Colonic mucosa (tissue), 4 donors: ENCODE measurements at regions of chr15 and their contacts with region 1.

Region 1: GRCh38 chr15:39580117-39580484 is 778 bp upstream of the THBS1 start:
- DNase-seq: peak; percentile 98
- H3K4me3 ChIP-seq: peak overlapping the region; percentile 62
- H3K27ac ChIP-seq: peak overlapping the region; percentile 88
- H3K4me1 ChIP-seq: no peaks in the 10 kb centered on the region
- H3K27me3 ChIP-seq: no peaks in the 10 kb centered on the region
- CTCF ChIP-seq: peak; percentile 99

Region 2: DNA sequence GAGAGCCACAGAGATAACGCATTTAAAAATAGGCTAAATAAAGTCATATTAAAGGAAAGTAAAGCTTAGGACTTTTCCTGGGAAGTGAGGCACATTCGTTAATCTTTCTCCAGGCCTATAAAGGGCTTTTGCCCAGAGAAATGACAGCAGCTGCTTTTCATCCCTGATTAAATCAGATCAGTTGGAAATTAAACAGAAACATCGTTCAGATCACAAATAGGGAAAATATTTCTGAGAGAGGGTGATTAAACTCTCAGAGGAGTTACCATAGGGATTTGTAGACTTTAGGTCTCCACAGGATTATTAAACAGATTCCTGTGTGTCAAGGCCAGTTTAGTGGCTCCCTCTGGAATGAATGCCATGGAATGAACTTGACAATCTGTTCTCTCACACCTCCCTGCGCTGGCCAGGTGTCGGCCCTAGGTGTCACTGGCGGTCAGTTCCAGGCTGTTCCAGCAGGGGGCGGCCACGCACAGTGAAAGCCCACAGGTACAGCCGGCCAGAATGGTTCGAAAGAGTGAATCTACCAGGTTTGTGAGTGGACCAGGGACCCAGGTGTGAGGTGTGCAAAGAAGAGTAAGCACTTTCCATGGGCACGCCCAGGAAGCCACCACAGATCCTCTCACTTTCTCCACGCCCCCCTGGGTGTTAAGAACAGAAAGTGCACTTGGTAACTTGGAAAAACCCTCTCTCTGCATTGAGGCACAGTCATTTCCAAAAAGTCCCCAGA is 762.5 kb before region 1 on chr15:
- intact Hi-C with region 1: loop called (anchors 5 kb)
- DNase-seq: peak; percentile 93
- H3K4me3 ChIP-seq: no peak overlapping the region
- H3K27ac ChIP-seq: no peak overlapping the region
- H3K4me1 ChIP-seq: no peaks in the 10 kb centered on the region
- H3K27me3 ChIP-seq: no peaks in the 10 kb centered on the region
- CTCF ChIP-seq: peak; percentile 98

Region 3: GRCh38 chr15:39125904-39126303 is 454.2 kb before region 1 on chr15:
- intact Hi-C with region 1: loop called (anchors 5 kb)
- DNase-seq: peak; percentile 42
- H3K4me3 ChIP-seq: no peak overlapping the region
- H3K27ac ChIP-seq: no peak overlapping the region
- H3K4me1 ChIP-seq: no peaks in the 10 kb centered on the region
- H3K27me3 ChIP-seq: no peaks in the 10 kb centered on the region
- CTCF ChIP-seq: peak; percentile 63

Region 4: GRCh38 chr15:39171944-39172368 is 408.1 kb before region 1 on chr15:
- intact Hi-C with region 1: loop called (anchors 2 kb)
- DNase-seq: peak; percentile 54
- H3K4me3 ChIP-seq: no peak overlapping the region
- H3K27ac ChIP-seq: peak overlapping the region; percentile 25
- H3K4me1 ChIP-seq: no peaks in the 10 kb centered on the region
- H3K27me3 ChIP-seq: no peaks in the 10 kb centered on the region
- CTCF ChIP-seq: peak; percentile 21

Region 5: GRCh38 chr15:39312984-39313383 is 267.1 kb before region 1 on chr15:
- intact Hi-C with region 1: loop called (anchors 2 kb)
- DNase-seq: peak; percentile 78
- H3K4me3 ChIP-seq: no peak overlapping the region
- H3K27ac ChIP-seq: peak overlapping the region; percentile 60
- H3K4me1 ChIP-seq: peaks cover 6% of the 10 kb centered on the region
- H3K27me3 ChIP-seq: no peaks in the 10 kb centered on the region
- CTCF ChIP-seq: peak; percentile 61

Region 6: GRCh38 chr15:39426552-39427532 is 153.3 kb before region 1 on chr15:
- intact Hi-C with region 1: no loop called
- DNase-seq: no peak
- H3K4me3 ChIP-seq: no peak overlapping the region
- H3K27ac ChIP-seq: no peak overlapping the region
- H3K4me1 ChIP-seq: no peaks in the 10 kb centered on the region
- H3K27me3 ChIP-seq: no peaks in the 10 kb centered on the region
- CTCF ChIP-seq: no peak